ENCODE measurements at regions of chr19 and their contacts with region 1.

Region 1: DNA sequence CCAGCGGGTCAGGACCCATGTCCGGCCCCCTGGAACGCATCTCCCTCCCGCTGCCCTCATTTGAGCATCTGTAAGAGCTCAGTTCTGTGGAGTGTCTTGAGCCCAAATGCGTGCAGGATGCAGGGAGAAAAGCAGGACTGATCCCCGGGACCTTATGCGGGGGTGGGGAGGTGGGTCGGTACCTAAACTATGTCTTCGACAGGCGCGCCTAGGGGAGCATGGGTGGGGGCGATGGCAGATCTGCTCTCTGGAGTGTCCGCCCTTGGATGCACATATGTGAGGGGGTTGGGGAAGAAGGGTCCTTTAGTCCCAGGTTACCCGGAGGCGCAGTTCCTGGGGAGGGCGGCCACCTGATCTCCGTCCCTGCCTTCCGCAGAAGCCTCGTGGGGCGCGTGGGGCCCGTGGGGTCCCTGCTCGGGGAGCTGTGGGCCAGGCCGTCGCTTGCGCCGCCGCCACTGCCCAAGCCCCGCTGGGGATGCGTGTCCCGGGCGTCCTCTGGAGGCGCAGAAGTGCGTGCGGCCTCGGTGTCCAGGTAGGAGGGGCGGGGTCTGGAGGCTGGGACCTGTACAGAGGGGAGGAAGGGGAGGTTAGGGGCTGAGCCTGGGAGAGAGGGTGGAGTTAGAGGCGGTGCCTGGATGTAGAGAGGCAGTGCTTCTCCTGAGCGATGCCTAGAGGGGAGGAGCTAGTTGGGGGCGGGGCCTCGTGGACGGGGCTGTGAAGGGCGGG is 2.8 kb downstream of the CILP2 start:
- DNase-seq: no peak
- H3K4me3 ChIP-seq: peak overlapping the region; percentile 4 to 54 (median 24)
- H3K27ac ChIP-seq: no peak overlapping the region
- H3K4me1 ChIP-seq: peaks cover 20 to 43% (median 34%) of the 10 kb centered on the region in 3 donors
- H3K27me3 ChIP-seq: peaks cover 0 to 98% (median 28%) of the 10 kb centered on the region in 4 donors
- CTCF ChIP-seq: no peak
- POLR2A ChIP-seq: no peak

Region 2: DNA sequence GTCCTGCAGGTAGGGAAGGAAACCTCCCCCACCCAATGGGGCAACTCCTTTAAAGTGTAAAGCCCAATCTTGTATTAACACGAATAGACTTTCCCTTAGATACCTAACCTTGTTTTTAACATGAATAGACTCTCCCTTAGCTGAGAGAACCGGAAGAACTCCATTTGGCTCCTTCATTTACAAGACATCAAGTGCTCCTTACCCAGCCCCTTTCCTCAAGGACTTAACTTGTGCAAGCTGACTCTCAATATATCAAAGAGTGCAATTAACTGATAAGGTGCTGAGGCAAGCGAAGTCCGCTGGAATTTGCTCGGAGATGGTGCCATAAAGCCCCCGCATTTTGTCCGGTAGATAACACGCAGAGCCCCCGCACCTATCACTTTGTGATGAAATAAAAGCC is 527.1 kb after region 1 on chr19:
- intact Hi-C with region 1: no loop called
- DNase-seq: no peak
- H3K4me3 ChIP-seq: no peak overlapping the region
- H3K27ac ChIP-seq: no peak overlapping the region
- H3K4me1 ChIP-seq: no peaks in the 10 kb centered on the region
- H3K27me3 ChIP-seq: peaks cover 0 to 13% (median 0%) of the 10 kb centered on the region in 4 donors
- CTCF ChIP-seq: no peak
- POLR2A ChIP-seq: no peak

Region 3: GRCh38 chr19:20278342-20278741 is 737.5 kb after region 1 on chr19:
- intact Hi-C with region 1: loop called (anchors 10 kb)
- DNase-seq: no peak
- H3K4me3 ChIP-seq: no peak overlapping the region
- H3K27ac ChIP-seq: no peak overlapping the region
- H3K4me1 ChIP-seq: no peaks in the 10 kb centered on the region
- H3K27me3 ChIP-seq: no peaks in the 10 kb centered on the region
- CTCF ChIP-seq: peak in 5 of 6 experiments; percentile 30 to 79 (median 42)
- POLR2A ChIP-seq: no peak

Measured in esophagus squamous epithelium (tissue), 5 donors.